Mammary epithelial cell (primary cell): ENCODE measurements at regions of chr15 and their contacts with region 1.

Region 1: GRCh38 chr15:50808728-50809127 is 43.2 kb upstream of the SPPL2A start:
- DNase-seq: no peak
- H3K4me3 ChIP-seq: no peak overlapping the region
- H3K27ac ChIP-seq: no peak overlapping the region
- H3K4me1 ChIP-seq: no peaks in the 10 kb centered on the region
- H3K27me3 ChIP-seq: no peaks in the 10 kb centered on the region
- CTCF ChIP-seq: no peak

Region 2: GRCh38 chr15:50855092-50855396 is 46.3 kb after region 1 on chr15:
- CTCF ChIA-PET with region 1: no interaction called
- dilution Hi-C with region 1: loop called (anchors 5 kb)
- in situ Hi-C with region 1: no loop called
- intact Hi-C with region 1: no loop called
- DNase-seq: no peak
- H3K4me3 ChIP-seq: no peak overlapping the region
- H3K27ac ChIP-seq: no peak overlapping the region
- H3K4me1 ChIP-seq: peaks cover 15% of the 10 kb centered on the region
- H3K27me3 ChIP-seq: no peaks in the 10 kb centered on the region
- CTCF ChIP-seq: no peak